ENCODE measurements at regions of chr18 and their contacts with region 1.

Region 1: DNA sequence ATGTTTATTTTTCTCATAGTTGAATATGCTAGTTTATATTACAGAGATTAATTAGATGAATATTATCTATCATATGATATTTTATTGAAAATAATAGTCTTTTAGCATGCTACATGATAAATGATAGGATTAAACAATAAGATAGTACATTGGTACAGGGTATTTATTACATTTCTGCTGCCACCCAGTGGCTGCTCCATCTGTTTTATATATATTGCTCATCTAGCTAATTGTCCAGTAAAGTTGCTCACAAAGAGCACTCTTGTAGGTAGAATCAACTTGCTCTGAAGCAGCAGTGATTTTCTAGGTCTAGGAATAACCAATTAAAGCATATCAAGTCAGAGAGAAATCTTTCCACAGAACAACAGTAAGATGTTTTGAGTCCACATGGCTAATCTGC is 183.3 kb downstream of the ASXL3 start:
- DNase-seq: no peak
- ATAC-seq: no peak
- H3K4me3 ChIP-seq: no peak overlapping the region
- H3K27ac ChIP-seq: no peak overlapping the region
- H3K4me1 ChIP-seq: no peaks in the 10 kb centered on the region
- H3K27me3 ChIP-seq: no peaks in the 10 kb centered on the region
- CTCF ChIP-seq: no peak
- POLR2A ChIP-seq: no peak

Region 2: GRCh38 chr18:33673689-33674088 is 87.7 kb before region 1 on chr18:
- in situ Hi-C with region 1: loop called in 1 of 4 experiments (anchors 25 kb)
- intact Hi-C with region 1: no loop called
- DNase-seq: no peak
- ATAC-seq: no peak
- H3K4me3 ChIP-seq: no peak overlapping the region
- H3K27ac ChIP-seq: no peak overlapping the region
- H3K4me1 ChIP-seq: no peaks in the 10 kb centered on the region
- H3K27me3 ChIP-seq: no peaks in the 10 kb centered on the region
- CTCF ChIP-seq: no peak
- POLR2A ChIP-seq: no peak